CD8-positive, alpha-beta T cell (primary cell): ENCODE measurements at regions of chr16 and their contacts with region 1.

Region 1: DNA sequence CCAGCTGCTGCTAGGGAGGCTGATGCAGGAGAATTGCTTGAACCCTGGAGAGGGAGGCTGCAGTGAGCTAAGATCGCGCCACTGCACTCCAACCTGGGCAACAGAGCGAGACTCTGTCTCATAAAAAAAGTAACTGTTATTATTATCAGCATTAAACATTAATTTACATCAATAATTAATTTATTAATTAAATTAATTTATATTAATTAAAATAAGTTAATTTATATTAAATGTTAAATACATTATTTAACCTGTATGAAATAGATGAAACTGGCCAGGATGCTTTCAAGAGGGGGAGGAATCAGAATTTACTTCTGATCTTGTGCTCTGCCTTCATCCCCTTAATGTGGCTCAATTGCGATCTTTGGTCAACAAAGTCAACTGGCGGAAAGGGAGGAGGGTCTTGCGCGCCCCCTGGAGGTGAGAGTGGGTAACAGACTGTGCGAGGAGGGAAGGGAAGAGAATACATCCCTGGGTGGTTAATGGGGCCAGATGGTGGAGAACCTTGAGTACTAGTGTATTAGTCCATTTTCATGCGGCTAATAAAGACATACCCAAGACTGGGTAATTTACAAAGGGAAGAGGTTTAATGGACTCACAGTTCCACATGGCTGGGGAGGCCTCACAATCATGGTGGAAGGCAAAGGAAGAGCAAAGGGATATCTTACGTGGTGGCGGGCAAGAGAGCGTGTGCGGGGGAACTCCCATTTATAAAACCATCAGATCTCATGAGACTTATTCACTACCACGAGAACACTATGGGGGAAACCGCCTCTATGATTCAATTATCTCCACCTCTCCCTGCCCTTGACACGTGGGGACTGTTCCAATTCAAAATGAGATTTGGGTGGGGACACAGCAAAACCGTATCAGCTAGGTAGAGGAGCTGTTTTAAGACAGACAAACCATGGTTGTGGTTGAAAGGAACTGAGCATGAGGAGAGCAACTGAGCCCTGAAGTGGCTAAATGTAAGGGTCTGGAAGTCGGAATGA is 15.7 kb upstream of the CPPED1 start:
- DNase-seq: peak; percentile 48 to 87 (median 72)
- ATAC-seq: peak; percentile 84
- H3K4me3 ChIP-seq: no peak overlapping the region
- H3K4me3 Mint-ChIP-seq: no peak overlapping the region
- H3K27ac ChIP-seq: no peak overlapping the region
- H3K27ac Mint-ChIP-seq: no peak overlapping the region
- H3K4me1 ChIP-seq: no peaks in the 10 kb centered on the region
- H3K4me1 Mint-ChIP-seq: peaks cover 3% of the 10 kb centered on the region
- H3K27me3 ChIP-seq: no peaks in the 10 kb centered on the region
- H3K27me3 Mint-ChIP-seq: peaks cover 3% of the 10 kb centered on the region
- CTCF ChIP-seq: peak; percentile 91

Region 2: DNA sequence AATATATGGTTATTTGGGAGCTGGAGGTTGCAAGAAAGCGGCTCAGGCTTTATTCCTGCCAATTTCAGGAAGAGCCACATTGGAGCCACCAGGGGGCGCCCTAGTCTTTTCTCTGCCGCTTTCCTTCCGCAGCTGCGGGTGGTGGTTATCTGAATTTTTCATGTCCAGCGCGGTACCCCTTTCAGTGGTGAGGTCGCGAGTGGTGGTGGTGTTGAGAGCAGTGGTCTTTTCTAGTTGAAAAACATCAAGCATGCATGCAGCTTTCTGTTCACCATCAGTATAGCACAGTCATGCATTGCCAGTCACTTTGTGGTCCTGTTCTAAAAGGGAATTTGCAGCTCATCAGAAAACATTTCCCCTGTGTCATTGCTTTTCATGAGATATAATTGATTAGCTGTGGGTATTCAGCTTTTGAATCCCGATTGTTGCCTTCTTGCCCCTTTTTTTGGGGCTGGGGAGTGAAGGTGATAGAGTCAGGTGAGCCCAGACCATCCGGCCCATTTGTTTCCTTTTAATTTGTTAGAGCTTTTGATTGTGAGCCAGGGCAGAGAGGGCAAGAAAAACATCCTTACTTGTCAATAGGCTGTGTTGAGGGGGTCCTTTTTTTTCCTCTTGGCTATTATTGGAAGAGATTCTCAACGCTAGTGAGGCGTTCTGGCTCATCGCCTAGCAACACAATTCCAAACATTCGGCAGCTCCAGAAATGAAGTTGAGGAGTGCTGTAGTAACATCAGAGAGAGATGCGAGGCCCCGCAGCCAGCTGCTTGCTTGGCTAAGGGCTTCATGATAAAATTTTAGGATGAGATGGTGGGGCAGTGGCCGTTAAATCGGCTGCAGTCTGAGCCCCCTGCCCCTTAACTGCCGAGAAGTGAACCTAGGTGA is 723.9 kb before region 1 on chr16:
- CTCF ChIA-PET with region 1: interaction called, 30 read pairs
- POLR2A ChIA-PET with region 1: no interaction called
- intact Hi-C with region 1: loop called (anchors 1 kb)
- DNase-seq: peak in 8 of 9 experiments; percentile 50 to 83 (median 71)
- ATAC-seq: peak; percentile 48
- H3K4me3 ChIP-seq: peak overlapping the region; percentile 10 to 15
- H3K4me3 Mint-ChIP-seq: peak overlapping the region; percentile 73
- H3K27ac ChIP-seq: no peak overlapping the region
- H3K27ac Mint-ChIP-seq: peak overlapping the region; percentile 12
- H3K4me1 ChIP-seq: peaks cover 9% of the 10 kb centered on the region
- H3K4me1 Mint-ChIP-seq: peaks cover 35% of the 10 kb centered on the region
- H3K27me3 ChIP-seq: no peaks in the 10 kb centered on the region
- H3K27me3 Mint-ChIP-seq: no peaks in the 10 kb centered on the region
- CTCF ChIP-seq: peak; percentile 94

Region 3: DNA sequence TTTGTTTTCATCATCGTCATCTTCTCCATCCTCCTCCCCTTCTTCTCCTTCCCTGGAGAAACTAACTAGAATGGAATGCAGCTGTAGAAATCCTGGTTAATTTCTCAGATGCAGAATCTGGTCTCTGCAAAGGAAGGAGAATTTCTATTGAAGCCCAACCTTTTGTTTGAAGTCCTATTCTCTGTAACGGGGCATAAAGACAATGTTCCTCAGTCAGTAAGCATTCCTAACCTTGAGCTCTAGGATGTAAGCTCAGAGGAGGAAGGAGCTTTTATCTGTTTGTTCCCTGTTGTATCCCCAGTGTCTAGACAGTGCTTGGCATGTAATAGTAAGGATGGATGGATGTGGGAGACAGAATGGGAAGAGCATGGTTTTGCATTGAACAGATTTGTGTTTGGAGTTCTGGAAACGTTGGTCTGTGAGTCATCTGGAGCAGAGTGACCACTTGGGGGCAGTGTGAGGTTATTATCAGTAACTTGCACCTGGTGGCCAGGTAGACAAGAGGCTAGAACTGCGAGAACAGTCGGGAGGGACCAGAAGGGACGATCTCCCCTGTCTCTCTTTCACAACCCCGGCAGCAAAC is 479.2 kb before region 1 on chr16:
- CTCF ChIA-PET with region 1: no interaction called
- POLR2A ChIA-PET with region 1: no interaction called
- intact Hi-C with region 1: loop called (anchors 1 to 2 kb)
- DNase-seq: peak in 3 of 9 experiments; percentile 8 to 27 (median 22)
- ATAC-seq: no peak
- H3K4me3 ChIP-seq: no peak overlapping the region
- H3K4me3 Mint-ChIP-seq: no peak overlapping the region
- H3K27ac ChIP-seq: no peak overlapping the region
- H3K27ac Mint-ChIP-seq: no peak overlapping the region
- H3K4me1 ChIP-seq: no peaks in the 10 kb centered on the region
- H3K4me1 Mint-ChIP-seq: no peaks in the 10 kb centered on the region
- H3K27me3 ChIP-seq: no peaks in the 10 kb centered on the region
- H3K27me3 Mint-ChIP-seq: no peaks in the 10 kb centered on the region
- CTCF ChIP-seq: peak; percentile 25

Region 4: GRCh38 chr16:12455287-12455798 is 364.1 kb before region 1 on chr16:
- CTCF ChIA-PET with region 1: interaction called, 5 read pairs
- POLR2A ChIA-PET with region 1: no interaction called
- intact Hi-C with region 1: loop called (anchors 1 kb)
- DNase-seq: peak in 4 of 9 experiments; percentile 19 to 36 (median 22)
- ATAC-seq: no peak
- H3K4me3 ChIP-seq: no peak overlapping the region
- H3K4me3 Mint-ChIP-seq: no peak overlapping the region
- H3K27ac ChIP-seq: no peak overlapping the region
- H3K27ac Mint-ChIP-seq: no peak overlapping the region
- H3K4me1 ChIP-seq: peaks cover 11% of the 10 kb centered on the region
- H3K4me1 Mint-ChIP-seq: peaks cover 27% of the 10 kb centered on the region
- H3K27me3 ChIP-seq: no peaks in the 10 kb centered on the region
- H3K27me3 Mint-ChIP-seq: no peaks in the 10 kb centered on the region
- CTCF ChIP-seq: peak; percentile 61

Region 5: DNA sequence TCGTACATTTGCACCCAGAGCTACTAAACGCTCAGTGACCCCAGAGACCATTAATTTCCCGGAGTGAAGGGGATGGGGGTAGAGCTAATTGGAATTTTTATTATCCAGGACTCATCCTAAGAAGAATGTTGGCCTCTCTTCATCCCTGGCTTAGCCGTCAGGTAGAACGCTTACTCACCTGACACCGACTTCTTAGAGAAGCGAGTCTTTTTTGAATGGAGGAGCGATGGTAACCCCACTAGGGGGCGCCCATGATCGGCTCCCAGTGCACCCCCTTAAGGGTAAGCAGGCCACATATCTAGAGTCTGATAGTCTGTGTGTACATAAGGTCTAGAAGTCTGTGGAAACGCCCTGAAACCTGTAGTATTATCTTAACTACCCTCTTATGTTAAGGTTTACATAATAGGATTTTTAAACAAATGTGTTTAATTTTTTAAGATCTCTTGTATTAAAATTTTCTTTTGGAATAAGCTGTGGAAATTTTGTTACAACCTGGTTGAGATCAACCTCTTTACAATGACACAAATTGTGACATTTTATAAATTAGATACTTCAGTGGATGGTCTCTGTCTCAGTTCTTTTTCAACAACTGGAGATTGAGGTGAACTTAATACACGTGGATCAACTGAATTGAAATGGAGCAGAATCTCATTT is 245.6 kb before region 1 on chr16:
- CTCF ChIA-PET with region 1: interaction called, 9 read pairs
- POLR2A ChIA-PET with region 1: no interaction called
- intact Hi-C with region 1: loop called in 1 of 2 experiments (anchors 1 kb)
- DNase-seq: peak in 7 of 9 experiments; percentile 31 to 61 (median 47)
- ATAC-seq: peak; percentile 36
- H3K4me3 ChIP-seq: no peak overlapping the region
- H3K4me3 Mint-ChIP-seq: no peak overlapping the region
- H3K27ac ChIP-seq: no peak overlapping the region
- H3K27ac Mint-ChIP-seq: no peak overlapping the region
- H3K4me1 ChIP-seq: no peaks in the 10 kb centered on the region
- H3K4me1 Mint-ChIP-seq: peaks cover 3% of the 10 kb centered on the region
- H3K27me3 ChIP-seq: no peaks in the 10 kb centered on the region
- H3K27me3 Mint-ChIP-seq: no peaks in the 10 kb centered on the region
- CTCF ChIP-seq: peak; percentile 43

Region 6: GRCh38 chr16:12786066-12786465 is 33.4 kb before region 1 on chr16:
- CTCF ChIA-PET with region 1: no interaction called
- POLR2A ChIA-PET with region 1: no interaction called
- intact Hi-C with region 1: loop called in 1 of 2 experiments (anchors 5 kb)
- DNase-seq: no peak
- ATAC-seq: no peak
- H3K4me3 ChIP-seq: no peak overlapping the region
- H3K4me3 Mint-ChIP-seq: no peak overlapping the region
- H3K27ac ChIP-seq: no peak overlapping the region
- H3K27ac Mint-ChIP-seq: no peak overlapping the region
- H3K4me1 ChIP-seq: no peaks in the 10 kb centered on the region
- H3K4me1 Mint-ChIP-seq: peaks cover 5% of the 10 kb centered on the region
- H3K27me3 ChIP-seq: no peaks in the 10 kb centered on the region
- H3K27me3 Mint-ChIP-seq: no peaks in the 10 kb centered on the region
- CTCF ChIP-seq: no peak

Region 7: GRCh38 chr16:12837291-12837690 is 17.9 kb after region 1 on chr16:
- CTCF ChIA-PET with region 1: no interaction called
- POLR2A ChIA-PET with region 1: no interaction called
- intact Hi-C with region 1: no loop called
- DNase-seq: no peak
- ATAC-seq: no peak
- H3K4me3 ChIP-seq: no peak overlapping the region
- H3K4me3 Mint-ChIP-seq: no peak overlapping the region
- H3K27ac ChIP-seq: no peak overlapping the region
- H3K27ac Mint-ChIP-seq: no peak overlapping the region
- H3K4me1 ChIP-seq: no peaks in the 10 kb centered on the region
- H3K4me1 Mint-ChIP-seq: peaks cover 2% of the 10 kb centered on the region
- H3K27me3 ChIP-seq: no peaks in the 10 kb centered on the region
- H3K27me3 Mint-ChIP-seq: peaks cover 23% of the 10 kb centered on the region
- CTCF ChIP-seq: no peak

Region 8: GRCh38 chr16:12898551-12898950 is 79.1 kb after region 1 on chr16:
- CTCF ChIA-PET with region 1: no interaction called
- POLR2A ChIA-PET with region 1: no interaction called
- intact Hi-C with region 1: no loop called
- DNase-seq: no peak
- ATAC-seq: no peak
- H3K4me3 ChIP-seq: no peak overlapping the region
- H3K4me3 Mint-ChIP-seq: no peak overlapping the region
- H3K27ac ChIP-seq: no peak overlapping the region
- H3K27ac Mint-ChIP-seq: no peak overlapping the region
- H3K4me1 ChIP-seq: no peaks in the 10 kb centered on the region
- H3K4me1 Mint-ChIP-seq: peaks cover 5% of the 10 kb centered on the region
- H3K27me3 ChIP-seq: peaks cover under 1 to 5% of the 10 kb centered on the region in 2 experiments
- H3K27me3 Mint-ChIP-seq: peaks cover 30% of the 10 kb centered on the region
- CTCF ChIP-seq: no peak